GM12878 (cell line): ENCODE measurements at regions of chr13 and their contacts with region 1.

Region 1: DNA sequence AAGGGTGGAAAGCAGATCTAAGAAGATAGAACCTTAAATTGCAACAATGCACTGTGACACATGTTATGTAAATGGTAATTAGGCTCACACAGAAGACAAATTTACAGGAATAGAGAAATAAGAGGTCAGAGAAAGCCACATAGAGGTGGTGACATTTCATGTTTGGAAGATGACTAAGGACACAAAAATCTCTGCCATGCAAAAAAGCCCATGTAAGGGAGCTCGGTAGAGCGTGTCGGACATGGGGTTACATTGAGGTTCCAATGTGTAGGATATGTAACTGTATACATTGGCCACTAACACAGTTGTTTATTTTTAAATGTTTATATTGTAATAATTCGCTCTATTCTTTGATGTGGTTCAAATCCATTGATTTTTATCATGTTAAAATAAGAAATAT is 33.7 kb downstream of the SUGT1 start:
- DNase-seq: no peak
- ATAC-seq: no peak
- H3K4me3 ChIP-seq: no peak overlapping the region
- H3K27ac ChIP-seq: no peak overlapping the region
- H3K4me1 ChIP-seq: no peaks in the 10 kb centered on the region
- H3K27me3 ChIP-seq: no peaks in the 10 kb centered on the region
- CTCF ChIP-seq: no peak
- EP300 ChIP-seq: no peak
- POLR2A ChIP-seq: no peak
- RAD21 ChIP-seq: no peak

Region 2: GRCh38 chr13:52673465-52673864 is 12.9 kb before region 1 on chr13:
- CTCF ChIA-PET with region 1: interaction called, 8 read pairs
- POLR2A ChIA-PET with region 1: interaction called, 3 read pairs
- RAD21 ChIA-PET with region 1: interaction called, 3 read pairs
- SMC1A ChIA-PET with region 1: interaction called, 13 read pairs
- in situ Hi-C with region 1: no loop called
- intact Hi-C with region 1: no loop called
- DNase-seq: no peak
- ATAC-seq: peak; percentile 42
- H3K4me3 ChIP-seq: no peak overlapping the region
- H3K27ac ChIP-seq: no peak overlapping the region
- H3K4me1 ChIP-seq: no peaks in the 10 kb centered on the region
- H3K27me3 ChIP-seq: no peaks in the 10 kb centered on the region
- CTCF ChIP-seq: no peak
- EP300 ChIP-seq: no peak
- POLR2A ChIP-seq: no peak
- RAD21 ChIP-seq: no peak

Region 3: DNA sequence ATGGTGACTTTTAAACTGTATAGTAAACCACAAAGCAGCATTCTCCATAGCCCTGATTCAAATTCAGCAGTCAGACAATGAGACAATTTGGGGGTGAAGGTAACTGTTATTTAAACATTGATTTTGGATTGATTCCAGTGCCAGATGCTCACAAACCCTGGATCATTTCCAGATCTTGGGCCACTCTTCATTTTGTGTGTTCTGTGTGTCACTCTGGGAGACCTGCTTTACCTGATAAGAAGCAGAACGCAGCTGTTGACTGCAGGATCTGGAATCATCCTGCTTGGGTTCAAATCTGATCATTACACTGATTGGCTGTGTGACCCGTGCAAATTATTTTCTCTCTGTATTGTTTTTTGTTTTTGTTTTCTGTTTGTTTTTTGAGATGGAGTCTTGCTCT is 166.1 kb after region 1 on chr13:
- CTCF ChIA-PET with region 1: no interaction called
- POLR2A ChIA-PET with region 1: no interaction called
- RAD21 ChIA-PET with region 1: no interaction called
- SMC1A ChIA-PET with region 1: no interaction called
- in situ Hi-C with region 1: no loop called
- intact Hi-C with region 1: no loop called
- DNase-seq: no peak
- ATAC-seq: no peak
- H3K4me3 ChIP-seq: 0 out of 2 replicates have a peak overlapping the region, but pooled peaks have one; percentile 3
- H3K27ac ChIP-seq: peak overlapping the region; percentile 22; the same call in 1 of the 2 replicates
- H3K4me1 ChIP-seq: peaks cover 30% of the 10 kb centered on the region
- H3K27me3 ChIP-seq: no peaks in the 10 kb centered on the region; a peak in 3 of 4 replicates
- CTCF ChIP-seq: no peak
- EP300 ChIP-seq: no peak
- POLR2A ChIP-seq: no peak
- RAD21 ChIP-seq: no peak

Region 4: DNA sequence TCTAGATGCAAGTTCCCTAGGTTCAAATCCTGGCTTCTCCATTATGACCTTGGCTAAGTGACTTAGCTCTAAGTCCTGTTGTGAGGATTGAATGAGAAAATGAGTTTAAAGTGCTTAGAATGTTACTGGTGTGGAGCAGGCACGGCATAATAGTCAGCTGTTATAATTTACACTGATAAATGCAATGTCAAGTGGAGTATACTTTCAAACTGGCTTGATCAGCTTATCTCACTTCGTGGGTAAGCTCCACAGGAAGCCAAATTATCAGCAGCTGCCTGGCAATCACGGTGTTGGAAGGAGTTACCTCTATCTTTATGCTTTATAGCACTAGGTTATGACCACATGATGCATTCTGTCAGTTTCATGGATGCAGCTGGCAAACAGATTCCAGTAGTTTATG is 615.1 kb after region 1 on chr13:
- CTCF ChIA-PET with region 1: no interaction called
- POLR2A ChIA-PET with region 1: no interaction called
- RAD21 ChIA-PET with region 1: no interaction called
- SMC1A ChIA-PET with region 1: no interaction called
- in situ Hi-C with region 1: no loop called
- intact Hi-C with region 1: no loop called
- DNase-seq: no peak
- ATAC-seq: no peak
- H3K4me3 ChIP-seq: no peak overlapping the region
- H3K27ac ChIP-seq: no peak overlapping the region
- H3K4me1 ChIP-seq: no peaks in the 10 kb centered on the region
- H3K27me3 ChIP-seq: no peaks in the 10 kb centered on the region
- CTCF ChIP-seq: no peak
- EP300 ChIP-seq: no peak
- POLR2A ChIP-seq: no peak
- RAD21 ChIP-seq: no peak